ENCODE measurements at regions of chr1 and their contacts with region 1.

Region 1: DNA sequence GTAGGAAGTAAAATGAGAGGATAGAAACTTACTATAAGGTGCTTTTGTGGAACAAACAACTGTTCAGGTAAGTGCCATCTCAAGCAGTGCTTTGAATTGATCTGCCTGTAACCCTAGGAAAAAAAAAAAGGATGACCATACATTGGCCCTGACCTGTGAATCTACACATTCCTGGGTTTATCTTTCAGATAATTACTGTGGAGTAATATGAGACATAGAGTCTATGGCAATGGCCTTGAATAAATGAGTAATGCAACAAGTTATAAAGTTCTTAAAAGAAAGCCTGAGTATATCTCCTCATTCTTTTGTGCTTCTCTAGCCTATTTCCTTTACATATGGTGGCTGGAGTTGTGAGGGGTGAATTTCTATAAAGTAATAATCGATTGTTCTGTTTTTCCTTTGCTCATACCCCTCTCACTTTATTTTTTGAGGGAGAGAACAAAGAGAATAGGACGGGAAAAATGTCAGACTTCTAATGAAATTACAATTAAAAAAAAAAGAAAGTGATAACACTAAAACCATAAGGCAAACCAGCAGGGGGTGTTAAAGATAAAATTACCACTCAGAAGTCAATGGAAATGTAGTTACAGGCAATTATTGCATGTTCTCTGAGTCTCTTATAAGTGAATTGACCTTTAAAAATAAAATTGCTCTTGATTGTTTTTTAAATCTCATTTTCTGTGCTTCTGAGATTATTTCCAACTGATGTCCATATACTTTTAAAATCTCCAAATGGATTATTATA is 12.4 kb upstream of the ATP1A1 start:
- DNase-seq: peak in 3 of 14 experiments; percentile 55 to 62 (median 57)
- ATAC-seq: no peak
- H3K4me3 ChIP-seq: no peak overlapping the region
- H3K4me3 Mint-ChIP-seq: no peak overlapping the region
- H3K27ac ChIP-seq: no peak overlapping the region
- H3K27ac Mint-ChIP-seq: no peak overlapping the region
- H3K4me1 ChIP-seq: no peaks in the 10 kb centered on the region
- H3K4me1 Mint-ChIP-seq: peaks cover 44% of the 10 kb centered on the region
- H3K27me3 ChIP-seq: no peaks in the 10 kb centered on the region
- H3K27me3 Mint-ChIP-seq: no peaks in the 10 kb centered on the region
- CTCF ChIP-seq: peak; percentile 38

Region 2: DNA sequence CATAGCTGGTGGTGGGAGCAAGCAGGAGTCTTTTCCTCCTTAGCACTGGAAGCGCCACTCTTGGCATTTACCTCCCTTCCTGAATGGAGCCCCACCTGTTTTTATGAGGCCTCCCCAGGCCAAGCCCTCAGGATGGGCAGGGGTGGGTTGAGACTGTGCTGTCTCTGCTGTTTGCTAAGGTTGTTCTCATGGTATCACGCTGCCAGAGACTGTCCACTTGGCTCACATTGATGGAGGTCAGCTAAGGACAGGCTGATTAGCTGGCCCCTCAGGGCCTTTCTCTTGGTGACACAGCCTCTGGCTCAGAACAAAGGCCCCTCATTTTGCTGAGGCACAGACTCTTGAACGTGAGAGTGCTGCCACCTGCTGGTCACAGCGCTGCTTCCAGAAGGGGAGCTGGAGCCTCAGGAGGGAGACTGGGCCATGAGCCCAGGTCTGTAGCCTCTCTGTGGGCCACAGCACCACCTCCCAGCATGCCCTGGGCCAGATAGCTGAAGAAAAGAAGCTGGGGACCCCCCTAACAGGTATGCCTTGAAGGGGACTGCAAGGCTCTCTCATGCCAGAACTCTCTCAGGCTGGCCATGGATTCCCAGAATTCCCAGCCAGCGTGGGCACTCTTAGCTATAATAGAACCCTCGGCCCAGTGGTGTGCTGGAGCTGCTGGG is 124.6 kb after region 1 on chr1:
- CTCF ChIA-PET with region 1: interaction called, 4 read pairs
- POLR2A ChIA-PET with region 1: no interaction called
- intact Hi-C with region 1: loop called (anchors 2 to 5 kb)
- DNase-seq: peak; percentile 79 to 95 (median 86)
- ATAC-seq: peak; percentile 90
- H3K4me3 ChIP-seq: no peak overlapping the region
- H3K4me3 Mint-ChIP-seq: no peak overlapping the region
- H3K27ac ChIP-seq: no peak overlapping the region
- H3K27ac Mint-ChIP-seq: no peak overlapping the region
- H3K4me1 ChIP-seq: peaks cover 4% of the 10 kb centered on the region
- H3K4me1 Mint-ChIP-seq: no peaks in the 10 kb centered on the region
- H3K27me3 ChIP-seq: no peaks in the 10 kb centered on the region
- H3K27me3 Mint-ChIP-seq: no peaks in the 10 kb centered on the region
- CTCF ChIP-seq: peak; percentile 99